ENCODE measurements at regions of chr10 and their contacts with region 1.

Region 1: GRCh38 chr10:109956454-109957091 is 33.3 kb upstream of the XPNPEP1 start:
- DNase-seq: no peak
- H3K4me3 ChIP-seq: no peak overlapping the region
- H3K27ac ChIP-seq: no peak overlapping the region
- H3K4me1 ChIP-seq: peaks cover 0 to 4% (median 2%) of the 10 kb centered on the region in 4 experiments; a peak in 6 of 7 replicates
- H3K27me3 ChIP-seq: no peaks in the 10 kb centered on the region
- CTCF ChIP-seq: peak; percentile 69 to 88 (median 74)
- EP300 ChIP-seq: no peak
- POLR2A ChIP-seq: no peak
- RAD21 ChIP-seq: peak; percentile 54 to 73

Region 2: DNA sequence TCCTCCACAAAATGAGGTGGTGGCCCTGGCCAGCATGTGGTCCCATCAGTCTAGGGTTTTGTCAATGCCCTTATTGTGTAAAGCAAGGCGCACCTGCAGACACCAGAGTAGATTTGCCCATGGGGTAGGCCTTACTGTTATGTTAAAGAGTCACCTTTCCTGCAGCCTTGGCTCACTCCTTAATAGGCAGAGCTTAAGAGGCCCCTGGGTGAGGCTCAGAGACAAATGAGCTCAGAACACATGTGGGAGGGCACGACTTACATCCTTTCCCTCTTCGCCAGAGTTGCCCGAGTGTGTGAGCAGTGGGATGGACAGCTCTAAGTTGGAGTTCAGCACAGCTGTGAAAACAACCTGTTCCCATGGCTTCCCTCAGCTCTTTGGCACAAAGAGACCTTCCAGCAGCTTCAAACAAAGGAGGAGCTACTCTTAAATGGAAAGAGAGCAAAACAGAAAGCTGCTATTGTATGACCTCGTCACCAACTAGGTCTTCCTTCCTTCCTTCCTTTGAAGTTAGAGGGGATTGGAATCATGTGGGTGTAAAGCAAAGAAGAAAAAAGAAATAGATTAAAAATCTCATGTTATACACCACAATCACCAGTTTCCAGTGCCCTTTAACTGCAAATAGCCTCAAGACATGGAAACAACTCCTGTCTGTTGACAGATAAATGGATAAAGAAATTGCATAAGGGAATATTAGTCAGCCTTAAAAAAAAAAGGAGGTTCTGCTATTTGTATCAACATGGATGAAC is 21.4 kb before region 1 on chr10:
- CTCF ChIA-PET with region 1: interaction called, 23 read pairs
- POLR2A ChIA-PET with region 1: interaction called, 4 read pairs
- DNase-seq: peak; percentile 70 to 73
- H3K4me3 ChIP-seq: peak overlapping the region in 1 of 4 experiments; percentile 44; a peak in 2 of 8 replicates
- H3K27ac ChIP-seq: peak overlapping the region; percentile 70; the same call in 1 of the 2 replicates
- H3K4me1 ChIP-seq: peaks cover 11 to 25% (median 24%) of the 10 kb centered on the region in 4 experiments
- H3K27me3 ChIP-seq: no peaks in the 10 kb centered on the region
- CTCF ChIP-seq: no peak
- EP300 ChIP-seq: peak in 1 of 2 experiments; percentile 89; a peak in 1 of 3 replicates
- POLR2A ChIP-seq: peak in 1 of 2 experiments; percentile 89; a peak in 2 of 3 replicates
- RAD21 ChIP-seq: no peak

Region 3: GRCh38 chr10:109966961-109967738 is 10.6 kb after region 1 on chr10:
- CTCF ChIA-PET with region 1: interaction called, 28 read pairs
- POLR2A ChIA-PET with region 1: no interaction called
- DNase-seq: no peak
- H3K4me3 ChIP-seq: no peak overlapping the region
- H3K27ac ChIP-seq: no peak overlapping the region
- H3K4me1 ChIP-seq: peaks cover 2 to 15% (median 6%) of the 10 kb centered on the region in 4 experiments; a peak in 5 of 7 replicates
- H3K27me3 ChIP-seq: no peaks in the 10 kb centered on the region
- CTCF ChIP-seq: no peak
- EP300 ChIP-seq: no peak
- POLR2A ChIP-seq: no peak
- RAD21 ChIP-seq: no peak

Region 4: GRCh38 chr10:110016039-110016438 is 59.5 kb after region 1 on chr10:
- CTCF ChIA-PET with region 1: interaction called, 20 read pairs
- POLR2A ChIA-PET with region 1: no interaction called
- DNase-seq: no peak
- H3K4me3 ChIP-seq: no peak overlapping the region
- H3K27ac ChIP-seq: no peak overlapping the region
- H3K4me1 ChIP-seq: peaks cover 0 to 15% (median 9%) of the 10 kb centered on the region in 4 experiments; a peak in 5 of 7 replicates
- H3K27me3 ChIP-seq: no peaks in the 10 kb centered on the region
- CTCF ChIP-seq: peak in 2 of 3 experiments; percentile 46 to 48; a peak in 3 of 4 replicates
- EP300 ChIP-seq: no peak
- POLR2A ChIP-seq: no peak
- RAD21 ChIP-seq: peak; percentile 61 to 71

Region 5: DNA sequence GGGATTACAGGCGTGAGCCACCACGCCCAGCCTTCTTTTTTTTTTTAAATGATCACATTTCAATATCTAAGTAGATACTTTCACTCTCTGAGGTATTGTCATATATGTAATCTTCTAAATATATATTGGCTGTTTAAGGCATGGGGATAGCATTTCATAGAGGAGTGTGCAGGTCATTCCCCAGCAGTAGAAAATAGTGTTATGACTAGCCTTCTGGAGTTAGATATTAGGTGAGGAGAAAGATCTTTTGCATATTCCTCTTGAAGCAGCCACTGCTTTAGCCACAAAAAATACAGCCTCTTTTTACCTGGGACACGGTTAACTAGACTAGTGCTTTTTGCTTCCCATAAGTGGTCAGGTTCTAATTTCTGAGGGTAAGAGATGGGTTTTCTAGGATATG is 80.1 kb after region 1 on chr10:
- CTCF ChIA-PET with region 1: interaction called, 10 read pairs
- POLR2A ChIA-PET with region 1: no interaction called
- DNase-seq: no peak
- H3K4me3 ChIP-seq: no peak overlapping the region
- H3K27ac ChIP-seq: no peak overlapping the region
- H3K4me1 ChIP-seq: peaks cover 0 to 3% (median 0%) of the 10 kb centered on the region in 4 experiments; a peak in 2 of 7 replicates
- H3K27me3 ChIP-seq: no peaks in the 10 kb centered on the region
- CTCF ChIP-seq: no peak
- EP300 ChIP-seq: no peak
- POLR2A ChIP-seq: no peak
- RAD21 ChIP-seq: no peak